B cell (primary cell): ENCODE measurements at regions of chr1 and their contacts with region 1.

Region 1: DNA sequence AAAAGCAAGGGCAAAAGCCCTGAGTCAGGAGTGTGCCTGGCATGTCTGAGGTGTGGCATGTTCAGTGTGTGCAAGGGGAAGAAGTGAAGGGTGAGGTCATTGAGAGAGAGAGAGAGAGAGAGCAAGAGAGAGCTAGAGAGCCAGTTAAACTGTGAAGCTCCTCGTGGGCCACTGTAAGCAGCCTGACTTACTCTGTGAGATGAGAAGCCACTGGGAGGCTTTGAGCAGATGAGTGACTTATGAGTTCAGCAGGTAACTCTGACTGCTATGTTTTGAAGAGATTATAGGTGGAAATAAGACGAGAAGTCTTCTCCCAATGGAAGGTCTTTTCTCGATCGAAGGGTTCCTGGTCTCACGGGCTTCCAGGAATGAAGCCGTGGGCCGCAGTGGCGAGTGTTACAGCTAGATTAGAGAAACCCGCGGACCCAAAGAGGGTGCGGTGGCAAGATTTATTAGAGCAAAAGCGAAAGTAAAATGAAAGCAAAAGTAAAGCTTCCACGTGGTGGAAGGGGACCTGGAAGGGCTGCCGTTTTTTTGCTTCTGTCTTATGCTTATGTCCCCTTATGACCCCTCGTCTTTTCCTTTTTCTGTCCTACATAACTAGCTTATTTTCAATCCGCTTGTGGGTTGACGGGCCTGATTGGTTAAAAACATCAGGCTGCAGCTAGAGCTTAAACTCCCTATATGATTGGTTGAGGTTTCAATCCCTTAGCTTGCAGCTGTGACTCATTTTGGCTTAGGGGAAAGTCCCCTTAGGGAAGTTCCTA is 323.1 kb upstream of the FAM78B start:
- DNase-seq: peak; percentile 76
- ATAC-seq: peak; percentile 81
- H3K4me3 ChIP-seq: peak overlapping the region; percentile 57 to 96 (median 83)
- H3K4me3 Mint-ChIP-seq: no peak overlapping the region
- H3K27ac ChIP-seq: peak overlapping the region; percentile 90 to 95
- H3K27ac Mint-ChIP-seq: no peak overlapping the region
- H3K4me1 ChIP-seq: peaks cover 14 to 19% of the 10 kb centered on the region in 2 donors
- H3K4me1 Mint-ChIP-seq: peaks cover 5% of the 10 kb centered on the region
- H3K27me3 ChIP-seq: no peaks in the 10 kb centered on the region
- H3K27me3 Mint-ChIP-seq: no peaks in the 10 kb centered on the region
- CTCF ChIP-seq: no peak

Region 2: GRCh38 chr1:166166695-166167571 is 322.9 kb before region 1 on chr1 and contains the start of gene FAM78B:
- CTCF ChIA-PET with region 1: no interaction called
- POLR2A ChIA-PET with region 1: no interaction called
- intact Hi-C with region 1: loop called (anchors 10 kb)
- DNase-seq: peak; percentile 77
- ATAC-seq: peak; percentile 80
- H3K4me3 ChIP-seq: peak within 1 kb of the TSS in 3 of 5 experiments; percentile 33 to 62 (median 55)
- H3K4me3 Mint-ChIP-seq: peak within 1 kb of the TSS; percentile 84
- H3K27ac ChIP-seq: no peak within 1 kb of the TSS
- H3K27ac Mint-ChIP-seq: peak within 1 kb of the TSS; percentile 34
- H3K4me1 ChIP-seq: peaks cover 21 to 22% of the 10 kb centered on the region in 2 donors
- H3K4me1 Mint-ChIP-seq: peaks cover 22% of the 10 kb centered on the region
- H3K27me3 ChIP-seq: peaks cover 0 to 29% (median 20%) of the 10 kb centered on the region in 4 experiments
- H3K27me3 Mint-ChIP-seq: peaks cover 42% of the 10 kb centered on the region
- CTCF ChIP-seq: no peak
- total RNA-seq, gene FAM78B: 0.46 and 0.81 TPM in 2 replicates